CD8-positive, alpha-beta T cell (primary cell): ENCODE measurements at regions of chr7 and their contacts with region 1.

Region 1: DNA sequence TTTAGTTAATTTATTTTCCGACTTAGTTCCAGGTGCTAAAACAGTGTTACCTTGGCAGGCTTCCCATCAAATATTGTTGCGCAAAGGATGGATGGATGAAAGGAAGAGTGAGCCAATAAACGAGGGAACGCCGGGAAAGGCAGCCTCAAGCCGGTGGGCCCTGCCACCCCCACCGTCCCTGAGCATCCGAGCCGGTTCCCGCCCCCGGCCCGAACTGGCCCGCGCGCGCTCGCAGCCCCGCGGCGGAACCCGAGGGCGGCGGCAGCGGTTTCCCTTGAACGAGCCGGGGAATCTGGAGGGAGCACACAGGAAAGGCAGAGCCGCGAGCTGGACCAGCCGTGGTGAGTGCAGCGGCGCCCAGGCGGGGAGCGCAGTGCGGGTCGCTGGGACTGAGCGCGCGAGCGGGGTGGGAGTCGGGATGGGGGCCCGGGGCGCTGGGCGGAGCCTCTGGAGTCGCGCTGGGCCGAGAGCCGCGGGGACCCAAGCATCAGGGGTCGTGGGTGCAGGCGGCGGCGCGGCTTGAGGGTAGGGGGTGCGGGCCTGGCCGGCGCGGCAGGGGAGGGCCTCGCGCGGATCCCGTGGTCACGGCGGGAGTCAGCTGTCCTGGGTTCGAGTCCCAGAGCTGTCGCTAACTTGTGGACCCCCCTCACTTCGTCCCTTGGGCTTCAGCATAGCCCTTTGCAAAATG is at the start of gene AGK:
- DNase-seq: peak; percentile 55 to 86 (median 72)
- ATAC-seq: peak; percentile 96
- H3K4me3 ChIP-seq: peak within 1 kb of the TSS; percentile 68 to 82
- H3K4me3 Mint-ChIP-seq: peak within 1 kb of the TSS; percentile 93
- H3K27ac ChIP-seq: peak within 1 kb of the TSS; percentile 34 to 50
- H3K27ac Mint-ChIP-seq: peak within 1 kb of the TSS; percentile 89
- H3K4me1 ChIP-seq: peaks cover 18% of the 10 kb centered on the region
- H3K4me1 Mint-ChIP-seq: peaks cover 31% of the 10 kb centered on the region
- H3K27me3 ChIP-seq: no peaks in the 10 kb centered on the region
- H3K27me3 Mint-ChIP-seq: no peaks in the 10 kb centered on the region
- CTCF ChIP-seq: no peak
- total RNA-seq, gene AGK: 20.5 to 22.6 TPM

Region 2: DNA sequence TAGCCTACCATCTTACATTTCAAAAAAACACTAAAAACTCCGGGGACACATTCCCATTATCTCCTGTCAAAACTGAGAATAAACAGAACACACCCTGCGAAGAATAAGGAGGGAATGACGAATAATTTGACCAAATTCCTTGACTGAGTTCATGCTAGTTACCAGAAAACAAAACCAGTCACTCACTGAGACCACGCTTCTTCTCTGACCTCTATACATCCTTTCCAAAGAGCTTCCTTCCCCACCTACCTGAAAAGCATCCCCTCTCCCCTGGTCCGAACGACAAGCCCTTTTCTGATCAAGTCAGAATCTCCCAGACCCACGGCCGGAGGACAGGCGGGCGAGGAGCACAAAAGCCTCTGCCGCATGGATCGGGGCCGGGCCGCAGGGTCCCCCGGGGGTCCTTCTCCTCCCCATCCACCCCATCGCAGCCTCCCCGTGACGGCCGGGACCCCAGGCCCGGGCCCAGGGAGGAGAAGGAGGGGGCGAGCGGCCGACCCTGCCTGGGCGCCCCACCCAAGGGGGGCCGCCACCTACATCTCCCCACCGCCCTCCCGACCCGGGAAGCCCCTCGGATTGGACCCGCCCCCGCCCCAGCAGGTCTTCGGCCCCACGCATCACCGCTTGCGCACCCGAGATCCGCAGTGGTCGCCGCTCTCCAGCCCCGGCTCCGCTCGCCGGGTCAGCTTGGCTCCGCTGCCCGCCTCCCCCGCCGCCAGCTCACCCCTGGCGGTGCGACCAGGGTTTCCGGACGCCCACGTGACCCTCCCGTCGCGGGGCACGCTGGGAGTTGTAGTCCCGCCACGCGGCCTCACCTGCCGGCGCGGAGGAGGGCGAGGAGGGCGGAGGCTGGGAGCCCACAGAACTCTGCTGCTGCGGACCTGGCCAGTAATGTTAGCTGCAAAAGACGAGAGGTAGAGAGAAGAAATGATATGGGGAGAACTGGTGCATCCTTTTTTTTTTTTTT is 1153.2 kb before region 1 on chr7 and contains the start of gene SLC37A3:
- CTCF ChIA-PET with region 1: no interaction called
- POLR2A ChIA-PET with region 1: no interaction called
- intact Hi-C with region 1: loop called in 1 of 2 experiments (anchors 10 kb)
- DNase-seq: peak; percentile 70 to 91 (median 87)
- ATAC-seq: peak; percentile 96
- H3K4me3 ChIP-seq: peak within 1 kb of the TSS; percentile 77 to 84
- H3K4me3 Mint-ChIP-seq: peak within 1 kb of the TSS; percentile 90
- H3K27ac ChIP-seq: peak within 1 kb of the TSS; percentile 48 to 59
- H3K27ac Mint-ChIP-seq: peak within 1 kb of the TSS; percentile 81
- H3K4me1 ChIP-seq: peaks cover 14% of the 10 kb centered on the region
- H3K4me1 Mint-ChIP-seq: peaks cover 28% of the 10 kb centered on the region
- H3K27me3 ChIP-seq: no peaks in the 10 kb centered on the region
- H3K27me3 Mint-ChIP-seq: no peaks in the 10 kb centered on the region
- CTCF ChIP-seq: peak; percentile 25
- total RNA-seq, gene SLC37A3: 28.4 to 32.1 TPM

Region 3: DNA sequence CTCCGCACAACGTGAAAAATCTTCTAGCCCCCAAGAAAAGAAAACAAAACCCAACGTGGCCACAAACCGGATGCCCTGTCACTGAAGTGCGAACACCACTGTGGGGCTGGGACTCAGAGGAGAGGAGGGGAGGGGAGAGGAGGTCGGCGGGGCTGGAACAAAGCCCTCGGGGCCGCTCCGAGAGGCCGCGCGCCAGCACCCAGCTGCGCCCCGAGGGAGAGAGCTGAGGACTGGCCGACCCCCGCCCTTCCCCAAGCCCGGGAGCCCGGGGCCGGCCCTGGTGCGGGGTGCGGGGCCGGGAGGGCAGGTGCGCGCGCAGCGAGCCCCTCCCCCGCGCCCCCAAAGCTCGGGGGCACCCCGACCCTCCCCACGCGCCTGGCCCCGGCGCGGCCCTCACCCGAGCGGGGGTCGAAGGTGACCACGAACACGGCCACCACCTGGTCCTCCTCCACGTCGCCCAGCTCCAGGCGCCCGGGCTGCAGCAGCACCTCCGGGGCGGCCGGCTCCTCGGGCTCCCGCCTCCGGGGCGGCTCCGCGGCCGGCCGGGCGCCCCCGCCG is 150.3 kb after region 1 on chr7:
- CTCF ChIA-PET with region 1: no interaction called
- POLR2A ChIA-PET with region 1: interaction called, 3 read pairs
- intact Hi-C with region 1: loop called (anchors 5 to 10 kb)
- DNase-seq: peak; percentile 50 to 93 (median 76)
- ATAC-seq: peak; percentile 86
- H3K4me3 ChIP-seq: peak overlapping the region; percentile 57
- H3K4me3 Mint-ChIP-seq: peak overlapping the region; percentile 89
- H3K27ac ChIP-seq: peak overlapping the region; percentile 63 to 74
- H3K27ac Mint-ChIP-seq: peak overlapping the region; percentile 92
- H3K4me1 ChIP-seq: peaks cover 36% of the 10 kb centered on the region
- H3K4me1 Mint-ChIP-seq: peaks cover 50% of the 10 kb centered on the region
- H3K27me3 ChIP-seq: no peaks in the 10 kb centered on the region
- H3K27me3 Mint-ChIP-seq: no peaks in the 10 kb centered on the region
- CTCF ChIP-seq: no peak